HEK293T (cell line): ENCODE measurements at regions of chr1 and their contacts with region 1.

Region 1: GRCh38 chr1:6245086-6245868 is 1.3 kb downstream of the HES3 start:
- DNase-seq: peak; percentile 85

Region 2: GRCh38 chr1:6273380-6273891 is 28.2 kb after region 1 on chr1:
- CTCF ChIA-PET with region 1: interaction called, 12 read pairs
- POLR2A ChIA-PET with region 1: interaction called, 3 read pairs
- DNase-seq: no peak

Region 3: GRCh38 chr1:6280761-6281451 is 35.6 kb after region 1 on chr1:
- CTCF ChIA-PET with region 1: interaction called, 12 read pairs
- POLR2A ChIA-PET with region 1: no interaction called
- DNase-seq: no peak

Region 4: DNA sequence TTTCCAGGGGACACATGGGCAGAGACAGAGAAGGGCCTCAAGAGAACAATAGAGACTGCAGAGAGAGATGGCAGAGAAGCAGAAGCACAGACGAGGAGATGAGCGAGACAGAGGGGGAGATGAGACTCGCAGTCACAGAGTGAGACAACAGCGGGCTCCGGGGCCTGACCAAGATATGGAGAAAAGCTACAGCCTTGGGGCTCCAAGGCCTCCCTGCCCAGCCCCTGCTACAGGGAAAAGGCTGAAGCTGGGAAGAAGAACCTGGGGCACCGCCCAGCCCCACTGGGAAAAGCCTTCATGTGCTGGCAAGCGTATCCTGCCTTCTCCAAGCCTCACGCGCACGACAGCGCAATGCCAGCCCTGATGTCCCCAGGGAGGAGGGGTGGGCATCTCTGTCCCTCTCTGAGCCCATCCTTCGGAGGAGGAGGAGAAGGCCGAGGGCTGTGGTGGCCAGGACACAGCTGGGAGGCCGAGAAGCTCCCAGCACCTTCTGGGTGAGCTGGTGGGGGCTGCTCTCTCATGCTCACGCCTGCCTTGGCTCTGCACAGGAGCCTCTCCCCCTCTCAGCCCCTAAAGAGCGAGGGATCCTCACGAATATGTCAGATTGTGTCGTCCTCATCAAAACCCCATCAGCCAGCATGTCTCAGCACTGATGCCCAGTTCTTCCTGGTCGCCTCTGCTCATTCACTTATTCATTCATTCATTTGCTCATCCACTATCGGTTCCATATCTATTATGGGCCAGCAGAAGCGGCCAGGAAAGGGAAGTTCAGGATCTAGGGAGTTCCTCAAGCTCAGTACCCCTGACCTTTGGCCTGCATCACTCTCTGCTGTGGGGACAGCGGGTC is 91.7 kb after region 1 on chr1:
- CTCF ChIA-PET with region 1: interaction called, 28 read pairs
- POLR2A ChIA-PET with region 1: interaction called, 4 read pairs
- DNase-seq: no peak

Region 5: DNA sequence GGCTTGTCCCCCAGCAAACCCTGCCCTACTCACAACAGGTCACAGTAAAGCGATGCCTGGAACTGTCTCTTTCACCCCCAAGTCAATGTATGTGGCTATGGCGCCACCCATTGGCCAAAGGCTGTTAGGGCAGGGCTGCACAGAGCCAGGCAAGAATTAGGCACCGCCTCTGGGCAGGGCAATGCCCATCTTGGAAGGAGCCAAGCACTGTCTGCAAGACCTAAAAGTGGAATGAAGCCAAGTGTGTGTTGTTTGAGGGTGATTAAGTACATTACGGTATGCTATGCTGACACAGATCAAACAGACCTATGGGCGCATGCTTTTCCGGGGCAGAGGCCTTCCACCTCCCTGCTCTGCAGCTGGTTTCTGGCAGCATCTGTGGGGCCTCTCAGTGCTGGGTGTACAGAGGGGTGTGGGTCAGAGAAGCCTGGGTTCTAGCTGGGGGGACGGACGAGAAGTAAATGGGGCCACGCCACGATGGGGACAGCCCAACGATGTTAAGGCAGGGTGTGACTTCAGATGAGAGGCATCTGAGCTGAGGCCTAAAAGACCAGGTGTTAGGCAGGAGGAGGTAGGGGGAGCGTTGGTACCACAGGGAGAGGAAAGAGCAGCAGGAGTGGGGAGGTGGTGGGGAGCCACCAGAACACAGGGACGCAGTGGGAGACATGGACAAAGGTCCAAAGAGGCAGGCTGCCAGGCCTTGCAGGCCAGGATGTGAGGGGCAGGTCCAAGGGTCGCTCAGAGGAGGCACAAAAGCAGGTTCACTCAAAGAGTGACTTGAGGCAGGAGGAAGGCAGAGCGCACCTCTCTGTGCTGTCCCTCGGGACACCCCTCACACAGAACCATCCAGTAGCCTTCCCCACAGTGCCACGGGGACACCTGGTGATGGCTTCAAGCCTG is 98.5 kb after region 1 on chr1:
- CTCF ChIA-PET with region 1: interaction called, 28 read pairs
- POLR2A ChIA-PET with region 1: interaction called, 4 read pairs
- DNase-seq: peak; percentile 80